HCT116 (cell line): ENCODE measurements at regions of chr9 and their contacts with region 1.

Region 1: DNA sequence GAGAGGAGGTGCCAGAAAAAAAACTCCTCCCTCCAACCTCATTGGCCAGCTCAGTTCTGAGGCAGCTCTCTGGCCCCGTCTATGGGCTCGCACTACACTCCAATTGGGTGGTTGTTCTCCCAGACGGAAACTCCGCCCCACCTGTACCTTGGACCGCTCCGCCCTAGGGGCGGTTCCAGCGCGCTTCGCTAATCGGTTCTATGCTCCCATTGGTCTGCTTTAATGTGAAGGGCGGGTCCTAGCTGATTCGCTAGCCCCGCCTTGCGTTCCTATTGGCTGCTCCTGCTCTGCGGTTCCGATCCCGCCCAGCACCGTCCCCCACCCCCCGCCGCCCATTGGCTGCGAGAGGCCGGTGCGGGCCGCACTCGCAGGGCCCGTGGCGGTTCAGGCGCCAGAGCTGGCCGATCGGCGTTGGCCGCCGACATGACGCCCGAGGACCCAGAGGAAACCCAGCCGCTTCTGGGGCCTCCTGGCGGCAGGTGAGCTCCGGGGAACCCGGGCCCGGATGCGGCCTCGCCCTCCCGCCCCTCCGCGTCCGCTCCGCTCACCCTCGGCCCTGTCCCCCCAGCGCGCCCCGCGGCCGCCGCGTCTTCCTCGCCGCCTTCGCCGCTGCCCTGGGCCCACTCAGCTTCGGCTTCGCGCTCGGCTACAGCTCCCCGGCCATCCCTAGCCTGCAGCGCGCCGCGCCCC is at the start of gene SLC2A8:
- DNase-seq: peak; percentile 99
- ATAC-seq: peak; percentile 93
- H3K4me3 ChIP-seq: peak within 1 kb of the TSS; percentile 59 to 73
- H3K27ac ChIP-seq: peak within 1 kb of the TSS; percentile 56; the same call in 1 of the 2 replicates
- H3K4me1 ChIP-seq: peaks cover 3 to 27% of the 10 kb centered on the region in 2 experiments; a peak in 3 of 4 replicates
- H3K27me3 ChIP-seq: no peaks in the 10 kb centered on the region
- CTCF ChIP-seq: peak in 1 of 3 experiments; percentile 7; a peak in 1 of 6 replicates
- POLR2A ChIP-seq: no peak
- RAD21 ChIP-seq: no peak
- total RNA-seq, gene SLC2A8: 16.8 TPM

Region 2: GRCh38 chr9:127224178-127224882 is 172.6 kb before region 1 on chr9:
- CTCF ChIA-PET with region 1: interaction called, 11 read pairs
- POLR2A ChIA-PET with region 1: interaction called, 9 read pairs
- RAD21 ChIA-PET with region 1: interaction called, 5 to 9 read pairs
- intact Hi-C with region 1: loop called (anchors 1 kb)
- DNase-seq: peak; percentile 85
- ATAC-seq: peak; percentile 82
- H3K4me3 ChIP-seq: peak overlapping the region; percentile 47 to 56
- H3K27ac ChIP-seq: peak overlapping the region; percentile 64; the same call in 1 of the 2 replicates
- H3K4me1 ChIP-seq: peaks cover 8 to 26% of the 10 kb centered on the region in 2 experiments; a peak in 3 of 4 replicates
- H3K27me3 ChIP-seq: peaks cover 19% of the 10 kb centered on the region; the same call in 1 of the 2 replicates
- CTCF ChIP-seq: no peak; a peak in 1 of 6 replicates
- POLR2A ChIP-seq: no peak
- RAD21 ChIP-seq: no peak